Activated CD8-positive, alpha-beta T cell treated with anti-CD3 and anti-CD28 coated beads, Interleukin-2, amount 10 ng/mL, durations not matched to agents 7 days and 5 days (primary cell): ENCODE measurements at regions of chr1 and their contacts with region 1.

Region 1: GRCh38 chr1:147627435-147628110 is 42.8 kb downstream of the ACP6 start:
- DNase-seq: peak; percentile 68
- ATAC-seq: peak; percentile 74
- H3K4me3 Mint-ChIP-seq: no peak overlapping the region
- H3K27ac Mint-ChIP-seq: no peak overlapping the region
- H3K4me1 Mint-ChIP-seq: peaks cover 24% of the 10 kb centered on the region
- H3K27me3 Mint-ChIP-seq: no peaks in the 10 kb centered on the region

Region 2: GRCh38 chr1:147494998-147495580 is 132.5 kb before region 1 on chr1:
- CTCF ChIA-PET with region 1: interaction called, 21 read pairs
- POLR2A ChIA-PET with region 1: no interaction called
- DNase-seq: peak; percentile 83
- ATAC-seq: peak; percentile 99
- H3K4me3 Mint-ChIP-seq: no peak overlapping the region
- H3K27ac Mint-ChIP-seq: no peak overlapping the region
- H3K4me1 Mint-ChIP-seq: peaks cover 7% of the 10 kb centered on the region
- H3K27me3 Mint-ChIP-seq: peaks cover 5% of the 10 kb centered on the region

Region 3: DNA sequence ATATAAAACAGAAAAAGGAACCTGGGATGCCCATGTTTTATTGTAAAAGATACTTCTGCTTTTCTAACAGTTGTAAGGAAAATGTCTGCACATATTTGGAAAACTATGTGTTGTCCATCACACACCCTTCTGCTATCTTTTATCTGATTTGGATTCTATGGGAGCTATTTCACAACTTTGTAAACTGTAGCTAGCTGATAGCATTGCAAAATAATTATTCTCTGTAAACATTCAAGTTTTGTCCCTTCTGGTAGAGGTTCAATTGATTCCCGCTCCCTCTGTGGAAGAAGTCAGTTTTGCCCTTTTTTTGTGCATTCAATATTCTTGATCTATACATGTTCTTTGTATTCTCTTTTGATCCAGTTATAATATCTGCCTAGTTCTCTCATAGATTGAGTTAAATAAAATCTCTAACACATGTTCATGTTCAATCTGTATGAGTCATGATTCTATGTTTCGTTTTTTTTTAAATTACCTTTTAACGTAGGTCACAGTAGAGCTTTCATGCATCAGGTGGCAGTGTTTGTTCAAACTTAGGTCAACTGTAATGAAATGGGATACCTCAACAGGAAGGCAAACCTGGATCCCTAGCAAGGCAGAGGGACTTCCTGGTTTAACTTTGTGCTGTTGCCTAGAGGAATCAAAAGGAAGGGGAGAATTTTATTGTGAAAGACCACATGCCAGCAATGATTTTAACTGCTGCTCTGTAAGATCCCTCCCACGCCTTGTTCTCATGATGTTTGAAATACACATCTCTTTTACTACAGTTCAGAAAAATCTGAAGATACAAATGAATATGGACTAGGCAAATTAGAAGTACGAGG is 112.3 kb before region 1 on chr1:
- CTCF ChIA-PET with region 1: interaction called, 21 read pairs
- POLR2A ChIA-PET with region 1: no interaction called
- DNase-seq: peak; percentile 27
- ATAC-seq: no peak
- H3K4me3 Mint-ChIP-seq: no peak overlapping the region
- H3K27ac Mint-ChIP-seq: no peak overlapping the region
- H3K4me1 Mint-ChIP-seq: peaks cover 6% of the 10 kb centered on the region
- H3K27me3 Mint-ChIP-seq: peaks cover 16% of the 10 kb centered on the region

Region 4: DNA sequence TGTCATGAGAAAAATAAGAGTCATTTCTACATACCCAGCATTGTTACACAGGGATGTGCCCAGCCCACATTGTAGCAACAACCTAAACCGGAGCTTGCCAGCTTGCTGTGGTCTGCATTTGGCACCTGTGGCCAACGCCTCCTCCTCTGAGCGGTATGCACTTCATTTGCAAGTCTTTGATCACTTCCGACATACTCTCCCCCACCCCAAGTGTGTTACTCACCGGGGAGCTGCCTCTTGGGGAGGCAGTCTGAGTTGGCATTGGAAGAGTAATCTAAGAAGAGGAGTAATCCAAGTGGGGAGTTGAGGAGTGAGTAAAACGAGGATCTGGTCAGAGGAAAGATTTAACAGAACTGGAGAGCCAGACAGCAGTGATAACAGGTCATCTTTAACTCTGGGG is 82.4 kb before region 1 on chr1:
- CTCF ChIA-PET with region 1: interaction called, 12 read pairs
- POLR2A ChIA-PET with region 1: no interaction called
- DNase-seq: peak; percentile 90
- ATAC-seq: peak; percentile 69
- H3K4me3 Mint-ChIP-seq: peak overlapping the region; percentile 36
- H3K27ac Mint-ChIP-seq: peak overlapping the region; percentile 73
- H3K4me1 Mint-ChIP-seq: peaks cover 70% of the 10 kb centered on the region
- H3K27me3 Mint-ChIP-seq: no peaks in the 10 kb centered on the region

Region 5: DNA sequence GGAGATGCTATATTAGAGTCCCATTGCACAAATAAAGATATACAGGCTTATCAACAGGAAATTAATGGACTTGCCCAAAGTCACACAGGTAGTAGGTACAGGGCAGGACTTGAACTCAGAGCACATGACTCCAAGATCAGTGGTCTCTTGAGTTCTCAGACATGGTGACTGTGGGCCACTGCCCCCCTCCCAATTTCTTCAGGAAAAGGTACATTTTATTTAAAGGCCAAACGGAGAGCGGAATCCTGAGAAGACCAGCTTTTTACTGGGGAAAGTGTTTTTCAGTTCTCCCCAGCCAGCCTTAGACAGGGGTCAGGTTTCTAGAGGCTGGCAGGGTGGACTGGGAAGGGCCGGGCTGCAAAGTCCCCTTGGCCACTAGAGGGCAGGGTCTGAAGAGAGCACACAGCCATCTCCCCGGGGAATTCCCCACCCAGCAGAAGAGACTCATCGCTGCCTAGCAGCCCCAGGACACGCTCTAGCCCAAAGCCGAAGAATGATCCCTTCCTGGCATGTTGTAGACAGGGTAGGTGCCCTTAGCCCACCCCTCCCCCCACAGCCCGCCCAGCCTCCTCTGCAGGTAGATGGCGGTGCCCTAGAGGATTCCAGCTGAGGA is 13.1 kb after region 1 on chr1:
- CTCF ChIA-PET with region 1: interaction called, 13 read pairs
- POLR2A ChIA-PET with region 1: no interaction called
- DNase-seq: peak; percentile 85
- ATAC-seq: peak; percentile 98
- H3K4me3 Mint-ChIP-seq: no peak overlapping the region
- H3K27ac Mint-ChIP-seq: no peak overlapping the region
- H3K4me1 Mint-ChIP-seq: peaks cover 46% of the 10 kb centered on the region
- H3K27me3 Mint-ChIP-seq: no peaks in the 10 kb centered on the region

Region 6: GRCh38 chr1:147647796-147648633 is 20.4 kb after region 1 on chr1:
- CTCF ChIA-PET with region 1: interaction called, 11 read pairs
- POLR2A ChIA-PET with region 1: no interaction called
- DNase-seq: peak; percentile 79
- ATAC-seq: peak; percentile 88
- H3K4me3 Mint-ChIP-seq: peak overlapping the region; percentile 67
- H3K27ac Mint-ChIP-seq: peak overlapping the region; percentile 82
- H3K4me1 Mint-ChIP-seq: peaks cover 75% of the 10 kb centered on the region
- H3K27me3 Mint-ChIP-seq: no peaks in the 10 kb centered on the region

Region 7: DNA sequence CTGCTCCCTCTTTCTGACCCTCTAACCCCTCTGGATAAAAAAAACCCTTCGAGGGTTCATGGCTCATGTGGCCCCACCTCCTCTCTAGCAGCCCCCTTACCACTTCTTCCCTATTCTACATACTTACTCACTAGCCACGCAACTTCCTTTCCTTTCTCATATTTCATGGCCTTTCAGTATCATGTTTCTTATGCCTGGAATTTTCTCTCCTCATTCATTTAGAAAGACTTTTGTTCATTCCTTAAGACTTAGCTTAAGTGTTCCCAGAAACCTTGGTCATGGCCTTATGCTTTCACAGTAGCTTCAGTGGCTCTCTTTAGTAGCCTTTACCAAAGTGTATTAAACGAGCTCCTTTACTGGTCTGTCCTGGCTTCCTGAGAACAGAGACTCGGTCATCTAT is 36.6 kb after region 1 on chr1:
- CTCF ChIA-PET with region 1: no interaction called
- POLR2A ChIA-PET with region 1: no interaction called
- DNase-seq: no peak
- ATAC-seq: no peak
- H3K4me3 Mint-ChIP-seq: no peak overlapping the region
- H3K27ac Mint-ChIP-seq: no peak overlapping the region
- H3K4me1 Mint-ChIP-seq: peaks cover 29% of the 10 kb centered on the region
- H3K27me3 Mint-ChIP-seq: no peaks in the 10 kb centered on the region

Region 8: GRCh38 chr1:147808025-147808424 is 180.5 kb after region 1 on chr1:
- CTCF ChIA-PET with region 1: no interaction called
- POLR2A ChIA-PET with region 1: no interaction called
- DNase-seq: no peak
- ATAC-seq: no peak
- H3K4me3 Mint-ChIP-seq: no peak overlapping the region
- H3K27ac Mint-ChIP-seq: no peak overlapping the region
- H3K4me1 Mint-ChIP-seq: no peaks in the 10 kb centered on the region
- H3K27me3 Mint-ChIP-seq: peaks cover 2% of the 10 kb centered on the region

Region 9: DNA sequence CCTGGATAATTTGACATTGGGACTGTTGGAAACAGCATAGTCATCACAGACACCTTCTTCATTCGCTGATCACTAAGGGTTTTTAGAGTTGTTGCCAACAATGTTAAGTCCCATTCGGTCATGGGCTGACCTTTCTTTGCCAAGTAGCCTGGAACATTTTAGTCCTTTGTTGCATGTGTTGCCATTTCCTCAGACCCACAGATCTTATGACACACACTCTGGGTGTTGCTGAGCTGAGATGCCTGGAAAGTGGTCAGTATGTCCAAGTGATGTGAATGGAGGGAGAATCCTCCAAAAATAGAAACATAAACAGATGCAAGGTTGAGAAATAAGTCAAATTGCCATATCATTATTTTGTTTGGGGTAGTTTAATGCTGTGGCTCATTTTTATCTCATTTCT is 194.3 kb after region 1 on chr1:
- CTCF ChIA-PET with region 1: no interaction called
- POLR2A ChIA-PET with region 1: no interaction called
- DNase-seq: no peak
- ATAC-seq: no peak
- H3K4me3 Mint-ChIP-seq: no peak overlapping the region
- H3K27ac Mint-ChIP-seq: no peak overlapping the region
- H3K4me1 Mint-ChIP-seq: no peaks in the 10 kb centered on the region
- H3K27me3 Mint-ChIP-seq: peaks cover 24% of the 10 kb centered on the region